Endothelial cell of umbilical vein (primary cell): ENCODE measurements at regions of chr18 and their contacts with region 1.

Region 1: DNA sequence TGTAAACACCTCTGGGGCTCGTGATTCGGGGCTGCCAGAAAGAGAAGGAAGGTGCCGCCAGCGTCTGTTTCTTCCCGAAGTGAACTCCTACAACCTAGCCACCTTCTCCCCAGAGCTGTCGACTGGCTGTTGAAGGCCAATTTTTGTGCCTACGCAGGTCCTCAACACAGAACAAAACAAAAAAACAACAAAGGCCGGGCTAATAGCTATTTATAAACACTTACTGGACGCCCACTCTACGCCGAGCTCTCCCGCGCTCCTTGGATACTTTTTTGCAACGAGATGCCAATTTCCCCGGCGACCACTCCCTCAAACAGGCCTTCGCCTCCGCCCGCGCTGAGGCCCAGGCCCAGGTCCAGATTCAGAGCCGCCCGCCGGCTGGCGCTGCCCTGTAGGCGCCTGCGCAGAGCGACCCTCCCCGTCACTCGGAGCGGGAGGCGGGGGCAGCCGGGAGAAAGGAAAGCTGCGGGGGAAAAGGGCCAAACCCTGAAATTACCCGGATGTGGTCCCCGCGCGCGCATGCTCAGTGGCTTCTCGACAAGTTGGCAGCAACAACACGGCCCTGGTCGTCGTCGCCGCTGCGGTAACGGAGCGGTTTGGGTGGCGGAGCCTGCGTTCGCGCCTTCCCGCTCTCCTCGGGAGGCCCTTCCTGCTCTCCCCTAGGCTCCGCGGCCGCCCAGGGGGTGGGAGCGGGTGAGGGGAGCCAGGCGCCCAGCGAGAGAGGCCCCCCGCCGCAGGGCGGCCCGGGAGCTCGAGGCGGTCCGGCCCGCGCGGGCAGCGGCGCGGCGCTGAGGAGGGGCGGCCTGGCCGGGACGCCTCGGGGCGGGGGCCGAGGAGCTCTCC is at the start of gene SMAD4:
- DNase-seq: peak; percentile 97
- H3K4me3 ChIP-seq: peak within 1 kb of the TSS; percentile 64 to 87 (median 87)
- H3K27ac ChIP-seq: peak within 1 kb of the TSS; percentile 93
- H3K4me1 ChIP-seq: peaks cover 21% of the 10 kb centered on the region
- H3K27me3 ChIP-seq: no peaks in the 10 kb centered on the region
- CTCF ChIP-seq: no peak
- POLR2A ChIP-seq: peak; percentile 85
- total RNA-seq, gene SMAD4: 79.3 and 82.8 TPM in 2 replicates

Region 2: GRCh38 chr18:50839996-50840395 is 189.9 kb before region 1 on chr18:
- CTCF ChIA-PET with region 1: no interaction called
- POLR2A ChIA-PET with region 1: no interaction called
- dilution Hi-C with region 1: no loop called
- intact Hi-C with region 1: no loop called
- DNase-seq: peak; percentile 20
- H3K4me3 ChIP-seq: no peak overlapping the region
- H3K27ac ChIP-seq: no peak overlapping the region
- H3K4me1 ChIP-seq: peaks cover 12% of the 10 kb centered on the region
- H3K27me3 ChIP-seq: no peaks in the 10 kb centered on the region
- CTCF ChIP-seq: no peak
- POLR2A ChIP-seq: no peak

Region 3: DNA sequence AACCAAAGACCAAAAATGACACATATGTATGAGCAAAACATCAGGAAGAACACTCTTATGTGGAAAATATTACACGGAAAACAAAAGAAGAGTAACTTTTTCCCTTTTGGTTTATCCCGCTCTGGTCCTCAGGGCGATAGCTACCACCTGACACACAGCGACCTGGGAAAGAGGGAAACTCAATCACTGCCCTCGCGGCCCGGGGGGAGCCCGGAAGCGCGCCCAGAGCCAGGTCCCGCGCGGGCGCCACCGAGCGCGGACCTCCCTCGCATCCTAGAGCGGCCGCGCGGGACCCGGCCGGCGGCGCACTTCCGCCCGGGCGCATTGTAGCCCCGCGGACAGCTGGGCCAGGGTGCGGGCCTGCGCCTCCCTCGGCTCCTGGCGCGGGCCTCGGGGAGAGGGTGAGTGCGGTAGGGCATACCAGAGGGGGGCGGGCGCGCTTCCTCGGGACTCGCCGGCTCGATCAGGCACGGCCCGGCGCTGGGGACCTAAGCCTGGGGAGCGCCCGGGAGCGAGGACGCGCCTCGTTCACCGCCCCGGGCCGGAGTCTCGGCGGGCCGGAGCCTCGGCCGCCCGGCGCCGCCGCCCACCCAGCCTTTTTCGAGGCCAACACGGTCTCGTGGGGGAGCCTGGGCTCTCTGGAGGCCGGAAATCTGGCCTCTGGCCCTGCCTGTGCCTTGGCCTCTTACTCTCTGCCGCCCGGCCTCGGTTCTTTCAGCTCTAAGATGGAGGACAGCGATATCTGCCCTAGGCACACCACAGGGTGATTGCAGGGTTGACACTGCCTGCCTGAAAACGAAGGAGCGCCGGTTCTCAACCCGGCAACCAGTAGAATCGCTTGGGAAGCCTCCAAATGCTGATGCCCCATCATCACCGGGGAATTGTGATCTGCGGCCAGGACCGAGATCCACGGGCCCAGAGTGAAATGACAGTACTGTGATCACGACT is 61.9 kb before region 1 on chr18 and contains the start of gene ELAC1:
- CTCF ChIA-PET with region 1: interaction called, 4 read pairs
- POLR2A ChIA-PET with region 1: interaction called, 11 read pairs
- dilution Hi-C with region 1: no loop called
- intact Hi-C with region 1: loop called (anchors 1 kb)
- DNase-seq: peak; percentile 75
- H3K4me3 ChIP-seq: peak within 1 kb of the TSS; percentile 58 to 95 (median 93)
- H3K27ac ChIP-seq: peak within 1 kb of the TSS; percentile 87
- H3K4me1 ChIP-seq: peaks cover 11% of the 10 kb centered on the region
- H3K27me3 ChIP-seq: no peaks in the 10 kb centered on the region
- CTCF ChIP-seq: no peak
- POLR2A ChIP-seq: peak; percentile 94
- total RNA-seq, gene ELAC1: 6.0 and 7.6 TPM in 2 replicates

Region 4: GRCh38 chr18:51016903-51017879 is 12.7 kb before region 1 on chr18:
- CTCF ChIA-PET with region 1: no interaction called
- POLR2A ChIA-PET with region 1: no interaction called
- dilution Hi-C with region 1: no loop called
- intact Hi-C with region 1: no loop called
- DNase-seq: no peak
- H3K4me3 ChIP-seq: no peak overlapping the region
- H3K27ac ChIP-seq: no peak overlapping the region
- H3K4me1 ChIP-seq: no peaks in the 10 kb centered on the region
- H3K27me3 ChIP-seq: no peaks in the 10 kb centered on the region
- CTCF ChIP-seq: no peak
- POLR2A ChIP-seq: no peak